Activated naive CD8-positive, alpha-beta T cell treated with anti-CD3 and anti-CD28 coated beads, Interleukin-2, amount 10 ng/mL, durations not matched to agents 7 days and 5 days (primary cell): ENCODE measurements at regions of chr9 and their contacts with region 1.

Region 1: DNA sequence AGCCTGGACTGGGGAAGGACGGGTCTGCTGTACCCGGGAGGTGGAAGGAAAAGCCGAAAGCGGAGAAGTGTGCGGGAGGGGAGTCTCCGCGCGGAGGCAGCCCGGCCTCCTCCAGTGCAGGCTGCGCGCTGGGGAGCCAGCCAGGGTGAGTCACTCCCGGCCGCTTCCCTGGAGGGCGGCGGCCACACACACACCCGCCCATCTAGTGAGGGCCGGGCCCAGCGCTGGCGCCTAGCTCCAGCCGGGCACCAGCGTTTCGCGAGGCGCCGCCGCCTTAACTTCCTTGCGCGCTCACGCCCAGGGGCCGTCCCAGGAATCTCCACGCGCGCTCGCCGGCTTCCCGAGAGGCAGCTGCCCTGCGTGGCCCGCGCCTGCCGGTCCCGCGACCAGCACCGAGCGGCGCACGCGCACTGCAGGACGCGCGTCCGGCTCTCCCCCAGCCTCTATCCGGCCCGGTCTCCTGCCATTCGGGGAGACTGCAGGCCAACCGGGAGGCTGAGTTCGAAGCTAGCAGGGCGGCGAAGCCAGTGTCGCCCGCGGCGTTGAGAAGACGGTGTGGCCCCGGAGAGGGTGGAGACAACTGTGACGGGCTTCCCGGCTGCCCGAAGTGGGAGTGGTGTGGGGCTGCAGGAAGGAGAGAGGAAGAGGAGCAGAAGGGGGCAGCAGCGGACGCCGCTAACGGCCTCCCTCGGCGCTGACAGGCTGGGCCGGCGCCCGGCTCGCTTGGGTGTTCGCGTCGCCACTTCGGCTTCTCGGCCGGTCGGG is at the start of gene JAK2:
- DNase-seq: peak; percentile 90
- ATAC-seq: peak; percentile 83
- H3K4me3 Mint-ChIP-seq: no peak within 1 kb of the TSS
- H3K27ac Mint-ChIP-seq: peak within 1 kb of the TSS; percentile 97
- H3K4me1 Mint-ChIP-seq: peaks cover 35% of the 10 kb centered on the region
- H3K27me3 Mint-ChIP-seq: no peaks in the 10 kb centered on the region
- total RNA-seq, gene JAK2: 23.5 to 25.9 TPM

Region 2: DNA sequence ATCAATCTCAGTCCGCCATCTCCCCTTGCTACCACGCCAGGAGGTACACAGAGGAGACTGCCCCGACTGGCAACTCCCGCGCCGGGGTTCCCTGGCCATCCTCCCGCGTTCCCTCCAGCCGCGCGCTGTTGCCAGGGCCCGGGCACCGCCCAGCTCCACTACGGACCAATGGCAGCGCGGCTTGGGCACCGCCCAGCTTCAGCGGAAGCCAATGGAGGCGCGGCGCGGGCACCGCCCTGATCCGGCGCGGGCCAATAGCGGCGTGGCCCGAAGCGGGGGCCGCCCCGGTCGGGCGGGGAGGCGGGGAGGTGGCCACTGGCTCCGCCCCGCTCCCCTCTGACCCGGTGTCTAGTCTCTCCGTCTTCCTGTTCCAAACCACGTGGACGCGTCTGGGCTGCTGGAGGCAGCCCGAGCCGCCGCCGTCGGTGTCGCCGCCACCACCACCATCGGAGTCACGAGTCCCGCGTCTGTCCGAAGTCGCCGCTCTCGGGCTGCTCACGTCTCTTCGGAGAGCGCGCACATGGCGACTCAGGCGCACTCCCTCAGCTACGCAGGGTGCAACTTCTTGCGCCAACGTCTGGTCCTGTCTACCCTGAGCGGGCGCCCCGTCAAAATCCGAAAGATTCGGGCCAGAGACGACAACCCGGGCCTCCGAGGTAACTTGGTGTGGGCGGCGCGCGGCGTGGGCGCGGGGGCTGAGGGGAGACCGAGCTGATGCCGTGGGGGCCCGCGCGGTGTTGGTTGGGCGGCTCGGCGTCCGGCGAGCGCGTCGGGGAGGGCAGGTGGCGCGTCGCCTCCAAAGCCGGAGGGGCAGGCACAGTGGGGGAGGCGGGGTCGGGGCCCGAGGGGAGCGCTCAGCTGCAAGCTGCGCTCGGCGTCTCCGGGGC is 192.0 kb before region 1 on chr9 and contains the start of gene RCL1:
- POLR2A ChIA-PET with region 1: interaction called, 19 read pairs
- DNase-seq: peak; percentile 98
- ATAC-seq: peak; percentile 97
- H3K4me3 Mint-ChIP-seq: peak within 1 kb of the TSS; percentile 95
- H3K27ac Mint-ChIP-seq: peak within 1 kb of the TSS; percentile 92
- H3K4me1 Mint-ChIP-seq: peaks cover 30% of the 10 kb centered on the region
- H3K27me3 Mint-ChIP-seq: no peaks in the 10 kb centered on the region
- total RNA-seq, gene RCL1: 14.4 to 15.1 TPM

Region 3: GRCh38 chr9:4939118-4939561 is 45.7 kb before region 1 on chr9:
- POLR2A ChIA-PET with region 1: interaction called, 16 read pairs
- DNase-seq: no peak
- ATAC-seq: peak; percentile 78
- H3K4me3 Mint-ChIP-seq: peak overlapping the region; percentile 47
- H3K27ac Mint-ChIP-seq: peak overlapping the region; percentile 85
- H3K4me1 Mint-ChIP-seq: peaks cover 56% of the 10 kb centered on the region
- H3K27me3 Mint-ChIP-seq: no peaks in the 10 kb centered on the region

Region 4: GRCh38 chr9:4964540-4964939 is 20.3 kb before region 1 on chr9:
- POLR2A ChIA-PET with region 1: interaction called, 11 read pairs
- DNase-seq: no peak
- ATAC-seq: no peak
- H3K4me3 Mint-ChIP-seq: no peak overlapping the region
- H3K27ac Mint-ChIP-seq: no peak overlapping the region
- H3K4me1 Mint-ChIP-seq: peaks cover 40% of the 10 kb centered on the region
- H3K27me3 Mint-ChIP-seq: no peaks in the 10 kb centered on the region

Region 5: GRCh38 chr9:4970970-4971641 is 13.7 kb before region 1 on chr9:
- POLR2A ChIA-PET with region 1: interaction called, 30 read pairs
- DNase-seq: peak; percentile 41
- ATAC-seq: peak; percentile 93
- H3K4me3 Mint-ChIP-seq: no peak overlapping the region
- H3K27ac Mint-ChIP-seq: no peak overlapping the region
- H3K4me1 Mint-ChIP-seq: peaks cover 31% of the 10 kb centered on the region
- H3K27me3 Mint-ChIP-seq: no peaks in the 10 kb centered on the region